Endothelial cell of umbilical vein (primary cell): ENCODE measurements at regions of chr6 and their contacts with region 1.

Region 1: GRCh38 chr6:157089258-157089657 is 234.1 kb downstream of the TMEM242 start:
- DNase-seq: no peak
- H3K4me3 ChIP-seq: no peak overlapping the region
- H3K27ac ChIP-seq: peak overlapping the region; percentile 80
- H3K4me1 ChIP-seq: peaks cover 55% of the 10 kb centered on the region
- H3K27me3 ChIP-seq: no peaks in the 10 kb centered on the region
- CTCF ChIP-seq: no peak
- POLR2A ChIP-seq: no peak

Region 2: DNA sequence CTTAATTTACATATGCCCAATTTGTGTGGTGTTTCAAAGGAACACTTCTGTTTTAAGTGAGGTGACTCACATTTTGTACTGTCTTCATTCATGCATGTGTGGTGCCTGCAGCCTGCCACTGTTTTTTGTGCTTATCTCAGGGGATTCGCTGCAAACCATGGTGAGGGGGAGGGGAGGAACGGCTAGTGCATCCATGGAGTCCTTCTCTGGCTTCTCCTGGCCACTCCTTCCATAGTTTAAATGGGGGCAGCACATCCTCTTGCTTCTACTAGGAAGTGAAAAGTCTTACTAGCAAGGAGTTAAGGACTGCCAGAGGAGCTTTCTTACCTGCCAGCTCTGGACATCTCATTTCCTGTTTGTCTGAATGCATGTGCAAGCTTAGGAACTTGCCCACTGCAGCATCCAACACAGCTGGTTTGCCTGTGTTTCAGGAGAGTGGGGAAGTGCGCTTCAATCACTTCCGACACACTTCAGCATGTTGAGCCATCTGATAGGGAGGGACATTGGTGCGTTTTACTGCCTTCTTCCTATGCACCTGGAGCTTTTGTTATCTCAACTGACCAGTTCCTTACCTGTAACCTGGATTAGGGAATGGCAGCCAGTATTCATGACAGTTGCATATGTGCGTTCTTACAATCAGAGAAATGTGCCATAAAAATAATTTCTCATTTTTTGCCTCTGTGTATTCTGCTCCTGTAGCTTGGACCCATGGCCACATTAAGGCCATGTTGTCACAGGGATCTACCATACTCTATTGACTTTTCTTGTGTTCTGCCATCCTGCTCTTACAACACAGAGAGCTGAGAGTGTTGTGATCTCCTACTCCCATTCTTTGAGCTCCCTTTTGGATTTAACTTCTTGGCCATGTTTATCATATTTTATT is 100.7 kb before region 1 on chr6:
- CTCF ChIA-PET with region 1: no interaction called
- POLR2A ChIA-PET with region 1: no interaction called
- dilution Hi-C with region 1: no loop called
- intact Hi-C with region 1: no loop called
- DNase-seq: no peak
- H3K4me3 ChIP-seq: no peak overlapping the region
- H3K27ac ChIP-seq: no peak overlapping the region
- H3K4me1 ChIP-seq: peaks cover 3% of the 10 kb centered on the region
- H3K27me3 ChIP-seq: no peaks in the 10 kb centered on the region
- CTCF ChIP-seq: no peak
- POLR2A ChIP-seq: no peak

Region 3: DNA sequence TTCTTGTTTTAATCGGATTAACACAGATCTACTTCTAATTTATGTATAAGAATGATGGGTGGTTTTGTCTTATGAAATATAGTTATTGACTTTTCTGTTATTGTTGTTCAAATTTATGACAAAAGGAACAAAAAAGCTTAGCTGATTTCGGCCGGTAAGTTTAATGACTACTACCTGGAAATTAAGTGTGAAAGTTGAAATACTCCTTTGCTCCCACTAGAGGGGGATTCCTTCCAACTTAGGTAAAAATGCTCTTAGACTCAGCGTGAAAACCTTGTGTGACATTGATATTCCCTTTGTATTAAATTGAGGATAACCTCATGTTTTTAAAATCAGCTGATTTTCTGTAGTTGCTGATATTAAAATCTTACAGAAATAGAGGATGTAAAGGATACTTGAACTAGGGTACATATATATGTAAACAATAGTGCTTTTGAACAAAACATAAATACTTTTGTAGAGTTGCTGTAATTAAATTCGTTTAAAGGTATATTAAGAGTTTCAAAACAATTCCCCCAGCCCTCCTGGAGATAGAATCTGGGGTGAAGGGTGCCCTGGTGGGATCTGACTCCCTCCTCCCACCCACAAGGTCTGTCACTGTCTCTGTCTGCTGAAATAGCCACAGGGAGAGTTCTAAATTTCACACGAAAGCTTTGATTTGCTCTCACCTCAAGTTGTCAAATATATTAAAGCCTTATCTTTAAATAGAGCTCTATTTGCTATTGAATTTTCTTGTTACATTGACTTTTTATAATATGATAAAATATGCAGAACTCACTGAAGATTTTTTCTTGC is 54.6 kb before region 1 on chr6:
- CTCF ChIA-PET with region 1: interaction called, 3 read pairs
- POLR2A ChIA-PET with region 1: no interaction called
- dilution Hi-C with region 1: no loop called
- intact Hi-C with region 1: loop called (anchors 2 kb)
- DNase-seq: peak; percentile 65
- H3K4me3 ChIP-seq: no peak overlapping the region
- H3K27ac ChIP-seq: peak overlapping the region; percentile 16
- H3K4me1 ChIP-seq: peaks cover 8% of the 10 kb centered on the region
- H3K27me3 ChIP-seq: no peaks in the 10 kb centered on the region
- CTCF ChIP-seq: peak; percentile 50 to 54
- POLR2A ChIP-seq: no peak

Region 4: DNA sequence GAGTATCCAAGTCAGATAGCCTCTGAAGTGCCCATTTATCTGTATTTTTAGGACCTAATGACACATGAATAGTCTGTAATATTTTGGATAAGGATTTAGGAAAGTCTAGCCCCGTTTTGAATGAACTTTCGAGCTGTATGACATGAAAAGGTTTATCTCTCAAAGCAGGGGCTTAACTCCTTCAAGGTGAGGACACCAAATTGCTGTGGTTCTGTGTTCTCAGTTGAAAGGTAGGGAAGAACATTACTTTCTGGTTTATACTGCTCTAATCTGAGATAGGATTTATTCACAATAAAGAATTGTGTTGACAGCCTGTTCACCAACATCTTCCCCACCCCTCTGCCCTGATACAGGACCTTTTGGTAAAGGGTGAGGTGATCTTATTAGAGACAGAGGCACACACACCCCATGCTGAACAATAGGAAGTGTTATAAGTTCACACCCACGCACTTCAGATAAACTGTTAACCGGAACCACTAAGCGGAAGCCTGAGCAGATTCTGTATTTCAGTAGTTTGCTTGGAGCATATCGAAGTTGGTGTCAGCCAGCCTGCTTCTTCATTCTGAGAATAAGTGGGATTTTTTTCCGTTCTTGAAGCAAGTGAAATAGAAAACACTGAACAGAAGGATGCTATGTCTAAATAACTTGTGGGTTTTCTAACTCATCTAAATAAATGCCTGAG is 10.8 kb after region 1 on chr6:
- CTCF ChIA-PET with region 1: interaction called, 3 read pairs
- POLR2A ChIA-PET with region 1: no interaction called
- dilution Hi-C with region 1: no loop called
- intact Hi-C with region 1: loop called (anchors 1 kb)
- DNase-seq: peak; percentile 65
- H3K4me3 ChIP-seq: no peak overlapping the region
- H3K27ac ChIP-seq: peak overlapping the region; percentile 21
- H3K4me1 ChIP-seq: peaks cover 10% of the 10 kb centered on the region
- H3K27me3 ChIP-seq: no peaks in the 10 kb centered on the region
- CTCF ChIP-seq: no peak
- POLR2A ChIP-seq: no peak

Region 5: GRCh38 chr6:157107915-157108651 is 18.8 kb after region 1 on chr6:
- CTCF ChIA-PET with region 1: no interaction called
- POLR2A ChIA-PET with region 1: no interaction called
- dilution Hi-C with region 1: no loop called
- intact Hi-C with region 1: loop called (anchors 1 kb)
- DNase-seq: peak; percentile 74
- H3K4me3 ChIP-seq: no peak overlapping the region
- H3K27ac ChIP-seq: peak overlapping the region; percentile 15
- H3K4me1 ChIP-seq: peaks cover 4% of the 10 kb centered on the region
- H3K27me3 ChIP-seq: no peaks in the 10 kb centered on the region
- CTCF ChIP-seq: no peak
- POLR2A ChIP-seq: no peak

Region 6: GRCh38 chr6:157134402-157135047 is 45.3 kb after region 1 on chr6:
- CTCF ChIA-PET with region 1: no interaction called
- POLR2A ChIA-PET with region 1: no interaction called
- dilution Hi-C with region 1: no loop called
- intact Hi-C with region 1: loop called (anchors 1 kb)
- DNase-seq: no peak
- H3K4me3 ChIP-seq: no peak overlapping the region
- H3K27ac ChIP-seq: no peak overlapping the region
- H3K4me1 ChIP-seq: peaks cover 8% of the 10 kb centered on the region
- H3K27me3 ChIP-seq: no peaks in the 10 kb centered on the region
- CTCF ChIP-seq: no peak
- POLR2A ChIP-seq: no peak

Region 7: DNA sequence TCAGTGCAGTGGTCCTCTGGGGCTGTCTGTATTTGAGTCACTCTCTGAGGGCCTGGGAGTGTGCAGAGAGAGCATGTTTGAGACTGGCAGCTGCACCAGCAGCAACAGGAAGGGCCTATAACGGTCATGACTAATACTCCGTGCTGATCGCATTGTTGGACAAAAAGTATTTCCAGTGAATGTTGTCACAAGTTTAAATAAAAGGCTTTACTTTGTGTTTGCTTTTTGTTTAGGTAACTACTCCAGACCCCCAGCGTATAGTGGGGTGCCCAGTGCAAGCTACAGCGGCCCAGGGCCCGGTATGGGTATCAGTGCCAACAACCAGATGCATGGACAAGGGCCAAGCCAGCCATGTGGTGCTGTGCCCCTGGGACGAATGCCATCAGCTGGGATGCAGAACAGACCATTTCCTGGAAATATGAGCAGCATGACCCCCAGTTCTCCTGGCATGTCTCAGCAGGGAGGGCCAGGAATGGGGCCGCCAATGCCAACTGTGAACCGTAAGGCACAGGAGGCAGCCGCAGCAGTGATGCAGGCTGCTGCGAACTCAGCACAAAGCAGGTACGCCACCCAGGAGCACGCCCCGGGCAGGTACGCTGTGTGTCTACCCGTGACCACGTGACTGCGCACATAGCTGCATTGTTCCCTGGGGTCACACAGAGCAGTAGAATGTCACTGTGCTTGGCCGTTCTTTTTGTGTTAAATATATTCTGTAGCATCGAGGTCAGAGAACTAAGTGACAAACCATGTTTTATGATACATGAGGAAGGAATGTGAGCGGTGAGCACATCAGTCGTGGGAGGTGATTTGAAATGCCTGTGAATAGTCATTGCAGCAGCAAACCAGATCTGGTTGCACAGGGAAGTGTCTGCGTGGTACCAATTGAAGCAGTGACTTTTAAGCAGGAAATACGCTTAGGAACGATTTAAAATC is 59.4 kb after region 1 on chr6:
- CTCF ChIA-PET with region 1: interaction called, 3 read pairs
- POLR2A ChIA-PET with region 1: no interaction called
- dilution Hi-C with region 1: no loop called
- intact Hi-C with region 1: loop called (anchors 1 kb)
- DNase-seq: peak; percentile 97
- H3K4me3 ChIP-seq: peak overlapping the region in 1 of 3 experiments; percentile 1
- H3K27ac ChIP-seq: peak overlapping the region; percentile 97
- H3K4me1 ChIP-seq: peaks cover 60% of the 10 kb centered on the region
- H3K27me3 ChIP-seq: no peaks in the 10 kb centered on the region
- CTCF ChIP-seq: no peak
- POLR2A ChIP-seq: no peak